Heart right ventricle (tissue), 16 donors: ENCODE measurements at regions of chr11 and their contacts with region 1.

Region 1: GRCh38 chr11:59534676-59535075 is 23.3 kb downstream of the OR4D9 start:
- DNase-seq: no peak
- ATAC-seq: no peak
- H3K4me3 ChIP-seq: no peak overlapping the region
- H3K27ac ChIP-seq: no peak overlapping the region
- H3K4me1 ChIP-seq: peaks cover 0 to 13% (median 7%) of the 10 kb centered on the region in 9 donors
- H3K27me3 ChIP-seq: no peaks in the 10 kb centered on the region
- CTCF ChIP-seq: no peak

Region 2: GRCh38 chr11:59680287-59681154 is 145.8 kb after region 1 on chr11:
- intact Hi-C with region 1: loop called in 9 of 10 experiments (anchors 1 to 10 kb)
- DNase-seq: peak; percentile 28 to 42
- ATAC-seq: peak; percentile 65 to 95 (median 81)
- H3K4me3 ChIP-seq: no peak overlapping the region
- H3K27ac ChIP-seq: no peak overlapping the region
- H3K4me1 ChIP-seq: no peaks in the 10 kb centered on the region
- H3K27me3 ChIP-seq: peaks cover 0 to 10% (median under 1%) of the 10 kb centered on the region in 7 donors
- CTCF ChIP-seq: peak; percentile 33 to 76 (median 67)